ENCODE measurements at regions of chr7 and their contacts with region 1.

Region 1: DNA sequence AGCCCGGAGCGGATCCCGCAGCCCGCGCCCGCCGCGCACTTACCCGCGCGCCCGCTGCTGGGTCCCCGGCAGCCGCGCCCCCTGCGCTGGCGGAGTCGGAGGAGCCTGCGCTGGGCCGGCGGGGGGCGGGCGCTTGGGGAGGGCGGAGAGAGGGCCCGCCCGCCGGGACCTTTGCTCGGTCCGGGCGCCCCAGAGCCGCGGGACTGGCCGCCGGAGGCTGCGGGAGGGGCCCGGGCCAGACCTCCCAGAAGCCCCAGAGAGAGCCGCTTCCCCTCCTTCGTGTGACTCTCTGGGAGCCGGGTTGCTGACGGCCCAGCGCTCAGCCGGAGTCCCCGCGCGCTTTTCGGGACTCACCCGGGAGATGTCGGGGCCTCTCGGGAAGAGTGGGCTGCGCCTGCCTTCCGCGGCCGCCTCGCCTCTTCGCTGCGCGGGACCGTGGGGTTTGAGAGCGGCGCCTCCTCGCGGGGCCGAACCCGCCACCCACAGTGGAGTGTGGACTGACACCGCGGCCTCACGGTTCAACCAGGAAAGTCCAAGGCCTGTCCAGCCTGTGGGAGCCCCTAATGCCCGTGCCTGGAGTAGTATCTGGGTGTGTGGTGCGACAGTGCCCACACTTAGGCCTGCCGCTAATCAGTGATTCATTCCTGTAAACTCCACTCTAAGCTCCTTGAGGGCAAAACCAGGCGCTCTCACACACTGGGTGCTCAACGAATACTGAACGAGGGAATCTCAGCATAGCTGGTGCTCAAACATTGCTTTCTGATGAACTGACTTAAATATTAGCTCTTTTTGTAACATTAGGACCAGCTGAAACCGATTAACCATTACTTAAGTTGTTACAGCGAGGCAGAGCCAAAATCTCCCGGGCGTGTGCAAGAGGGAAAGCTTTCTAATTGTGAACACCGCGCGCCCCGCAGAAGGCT is at the start of gene GSDME:
- DNase-seq: peak; percentile 35
- H3K4me3 Mint-ChIP-seq: peak within 1 kb of the TSS; percentile 78
- H3K27ac Mint-ChIP-seq: no peak within 1 kb of the TSS
- H3K4me1 Mint-ChIP-seq: peaks cover 30% of the 10 kb centered on the region
- H3K27me3 Mint-ChIP-seq: peaks cover 45% of the 10 kb centered on the region
- total RNA-seq, gene GSDME: 4.7 TPM

Region 2: DNA sequence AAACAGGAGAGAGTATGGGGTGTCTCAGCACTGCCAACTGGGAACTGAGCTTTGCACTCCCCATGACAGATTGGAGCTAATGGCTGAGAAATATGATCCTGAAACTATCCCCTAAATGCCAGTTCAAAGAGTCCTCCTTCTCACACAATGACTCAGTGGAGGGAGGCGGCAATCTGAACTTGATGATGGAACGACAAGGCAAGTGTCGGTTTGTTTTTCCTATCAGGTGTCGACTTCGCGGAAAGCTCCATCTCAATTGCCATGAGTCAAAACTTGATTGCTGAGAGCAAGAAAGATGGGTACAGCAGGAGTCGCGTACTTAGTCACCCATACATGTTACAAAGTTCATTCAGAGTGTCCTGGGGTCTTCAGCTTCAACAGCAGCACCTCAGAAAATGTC is 421.2 kb before region 1 on chr7:
- CTCF ChIA-PET with region 1: no interaction called
- POLR2A ChIA-PET with region 1: no interaction called
- intact Hi-C with region 1: loop called (anchors 1 kb)
- DNase-seq: peak; percentile 74
- H3K4me3 Mint-ChIP-seq: no peak overlapping the region
- H3K27ac Mint-ChIP-seq: no peak overlapping the region
- H3K4me1 Mint-ChIP-seq: peaks cover 6% of the 10 kb centered on the region
- H3K27me3 Mint-ChIP-seq: peaks cover 27% of the 10 kb centered on the region

Region 3: DNA sequence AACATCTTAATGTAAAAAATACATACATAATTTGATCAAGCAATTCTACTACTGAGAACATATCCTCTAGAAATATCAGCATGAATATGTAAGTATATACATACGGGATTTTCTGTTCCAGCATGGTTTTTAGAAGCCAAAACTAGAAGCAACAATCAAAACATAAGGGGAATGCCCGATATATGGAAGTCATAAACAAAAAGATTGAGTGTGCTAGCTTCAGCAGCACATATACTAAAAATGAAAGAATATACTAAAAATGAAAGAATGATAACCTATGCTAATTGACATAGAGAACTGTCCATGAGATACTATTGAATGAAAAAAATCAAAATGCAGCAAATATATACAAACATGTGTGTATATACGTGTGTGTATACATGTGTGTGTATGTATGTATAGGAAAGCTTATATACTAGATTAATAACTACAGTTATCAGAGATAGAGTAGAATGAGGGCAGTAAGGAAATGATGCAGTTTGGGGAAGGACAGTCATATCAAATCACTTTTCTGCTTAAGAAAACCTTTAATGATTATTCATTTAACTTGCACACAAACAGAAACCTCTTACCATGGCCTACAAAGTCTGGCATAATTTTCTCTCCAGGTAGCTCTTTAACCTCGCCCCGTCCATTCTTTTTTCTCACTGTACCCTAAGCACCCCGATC is 400.8 kb before region 1 on chr7:
- CTCF ChIA-PET with region 1: no interaction called
- POLR2A ChIA-PET with region 1: no interaction called
- intact Hi-C with region 1: loop called (anchors 2 kb)
- DNase-seq: no peak
- H3K4me3 Mint-ChIP-seq: no peak overlapping the region
- H3K27ac Mint-ChIP-seq: no peak overlapping the region
- H3K4me1 Mint-ChIP-seq: peaks cover 11% of the 10 kb centered on the region
- H3K27me3 Mint-ChIP-seq: peaks cover 19% of the 10 kb centered on the region

Region 4: GRCh38 chr7:24422441-24423010 is 335.1 kb before region 1 on chr7:
- CTCF ChIA-PET with region 1: no interaction called
- POLR2A ChIA-PET with region 1: no interaction called
- intact Hi-C with region 1: no loop called
- DNase-seq: no peak
- H3K4me3 Mint-ChIP-seq: no peak overlapping the region
- H3K27ac Mint-ChIP-seq: no peak overlapping the region
- H3K4me1 Mint-ChIP-seq: no peaks in the 10 kb centered on the region
- H3K27me3 Mint-ChIP-seq: peaks cover 5% of the 10 kb centered on the region

Region 5: DNA sequence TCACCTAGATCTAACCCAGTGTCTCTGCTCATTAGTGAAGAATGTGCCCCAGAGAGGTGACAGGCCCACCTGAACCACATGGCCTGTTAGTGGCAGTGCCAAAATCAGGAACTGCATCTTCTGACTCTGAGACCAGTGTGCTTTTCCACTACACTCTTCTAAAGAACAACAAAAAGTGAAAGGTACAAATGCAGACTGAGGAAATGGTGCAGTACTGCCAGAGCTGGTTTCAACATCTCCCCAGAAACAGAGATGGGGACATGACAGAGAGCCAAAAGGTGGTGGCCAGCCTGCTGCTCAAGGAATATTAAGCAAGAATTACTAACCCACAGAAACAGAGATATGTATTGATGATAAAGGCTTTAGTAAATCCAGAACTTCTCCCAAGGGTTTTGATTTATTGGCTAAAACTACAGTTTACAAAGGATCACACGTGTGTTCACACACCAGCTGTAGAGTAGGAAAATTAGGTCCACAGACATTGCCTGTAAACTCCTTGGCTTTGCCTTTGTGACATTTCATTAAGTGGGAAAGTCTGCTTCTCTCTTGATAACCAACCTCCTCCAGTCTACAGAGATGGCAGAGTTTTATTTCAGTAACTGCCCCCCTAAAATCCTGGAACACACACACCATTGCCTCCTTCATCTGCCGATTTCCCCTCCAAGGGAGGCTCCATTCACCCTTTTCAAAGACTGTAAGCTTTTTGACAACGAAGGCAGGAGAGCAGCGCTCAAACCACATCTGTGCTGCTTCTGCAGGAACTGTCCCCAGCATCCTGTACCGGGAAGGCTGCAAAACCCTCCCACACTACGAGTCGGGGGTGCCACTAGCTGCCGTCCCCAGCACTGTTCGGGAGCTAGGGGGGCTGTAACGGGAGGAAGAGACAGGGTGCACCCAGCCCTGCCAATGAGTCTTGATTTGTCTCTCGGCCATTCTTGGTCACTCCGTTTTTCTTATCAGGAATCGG is 30.2 kb before region 1 on chr7:
- CTCF ChIA-PET with region 1: no interaction called
- POLR2A ChIA-PET with region 1: no interaction called
- intact Hi-C with region 1: loop called (anchors 1 kb)
- DNase-seq: no peak
- H3K4me3 Mint-ChIP-seq: no peak overlapping the region
- H3K27ac Mint-ChIP-seq: no peak overlapping the region
- H3K4me1 Mint-ChIP-seq: peaks cover 24% of the 10 kb centered on the region
- H3K27me3 Mint-ChIP-seq: peaks cover 20% of the 10 kb centered on the region

Region 6: DNA sequence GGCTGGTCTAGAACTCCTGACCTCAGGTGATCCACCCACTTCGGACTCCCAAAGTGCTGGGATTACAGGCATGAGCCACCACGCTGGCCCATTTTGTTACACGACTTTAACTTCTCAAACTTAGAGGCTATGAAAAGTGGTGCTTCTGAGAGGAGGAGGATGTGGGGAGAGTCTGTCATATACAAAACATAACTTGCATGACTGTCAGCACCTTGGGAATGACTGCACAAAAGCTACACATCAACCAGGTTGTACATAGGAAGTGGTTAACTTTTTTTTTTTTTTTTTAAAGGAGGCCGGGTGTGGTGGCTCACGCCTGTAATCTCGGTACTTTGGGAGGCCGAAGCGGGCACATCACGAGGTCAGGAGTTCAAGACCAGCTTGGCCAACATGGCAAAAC is 43.1 kb after region 1 on chr7:
- CTCF ChIA-PET with region 1: no interaction called
- POLR2A ChIA-PET with region 1: no interaction called
- intact Hi-C with region 1: loop called (anchors 2 kb)
- DNase-seq: peak; percentile 27
- H3K4me3 Mint-ChIP-seq: no peak overlapping the region
- H3K27ac Mint-ChIP-seq: no peak overlapping the region
- H3K4me1 Mint-ChIP-seq: peaks cover 10% of the 10 kb centered on the region
- H3K27me3 Mint-ChIP-seq: no peaks in the 10 kb centered on the region

Region 7: DNA sequence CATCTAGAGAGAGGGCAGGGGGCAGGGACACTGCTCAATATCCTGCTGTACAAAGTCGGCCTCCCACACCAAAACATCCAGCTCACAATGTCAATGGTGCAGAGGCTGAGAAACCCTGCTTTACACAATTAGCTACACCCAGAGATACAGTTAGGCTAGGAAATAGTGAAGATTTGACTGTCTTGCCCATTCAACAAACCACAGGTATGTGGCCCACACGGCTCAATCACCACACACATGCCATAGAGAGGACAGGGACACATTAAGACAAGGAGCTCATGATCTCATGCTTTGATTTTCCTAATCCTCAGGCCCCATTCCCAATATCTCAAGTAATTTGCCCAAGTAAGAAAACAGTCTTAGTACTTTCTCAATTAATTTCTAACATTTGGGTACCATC is 112.0 kb after region 1 on chr7:
- CTCF ChIA-PET with region 1: no interaction called
- POLR2A ChIA-PET with region 1: no interaction called
- intact Hi-C with region 1: loop called (anchors 1 kb)
- DNase-seq: no peak
- H3K4me3 Mint-ChIP-seq: no peak overlapping the region
- H3K27ac Mint-ChIP-seq: no peak overlapping the region
- H3K4me1 Mint-ChIP-seq: peaks cover 39% of the 10 kb centered on the region
- H3K27me3 Mint-ChIP-seq: no peaks in the 10 kb centered on the region

Region 8: GRCh38 chr7:25028370-25029021 is 270.9 kb after region 1 on chr7:
- CTCF ChIA-PET with region 1: no interaction called
- POLR2A ChIA-PET with region 1: no interaction called
- intact Hi-C with region 1: loop called (anchors 1 kb)
- DNase-seq: peak; percentile 42
- H3K4me3 Mint-ChIP-seq: peak overlapping the region; percentile 0
- H3K27ac Mint-ChIP-seq: peak overlapping the region; percentile 70
- H3K4me1 Mint-ChIP-seq: peaks cover 48% of the 10 kb centered on the region
- H3K27me3 Mint-ChIP-seq: no peaks in the 10 kb centered on the region

Region 9: GRCh38 chr7:25615003-25615402 is 857.4 kb after region 1 on chr7:
- CTCF ChIA-PET with region 1: no interaction called
- POLR2A ChIA-PET with region 1: no interaction called
- intact Hi-C with region 1: no loop called
- DNase-seq: no peak
- H3K4me3 Mint-ChIP-seq: no peak overlapping the region
- H3K27ac Mint-ChIP-seq: no peak overlapping the region
- H3K4me1 Mint-ChIP-seq: peaks cover 5% of the 10 kb centered on the region
- H3K27me3 Mint-ChIP-seq: peaks cover 7% of the 10 kb centered on the region

Measured in activated CD4-positive, alpha-beta memory T cell treated with anti-CD3 and anti-CD28 coated beads for 36 hours (primary cell).